ENCODE measurements at regions of chr1 and their contacts with region 1.

Region 1: GRCh38 chr1:6401673-6402072 is 8.1 kb upstream of the ACOT7 start:
- DNase-seq: no peak
- H3K4me3 ChIP-seq: no peak overlapping the region
- H3K27me3 ChIP-seq: peaks cover 2% of the 10 kb centered on the region; the same call in 1 of the 2 replicates
- CTCF ChIP-seq: no peak

Region 2: GRCh38 chr1:6343506-6344405 is 57.9 kb before region 1 on chr1:
- CTCF ChIA-PET with region 1: interaction called, 45 read pairs
- POLR2A ChIA-PET with region 1: no interaction called
- DNase-seq: no peak
- H3K4me3 ChIP-seq: no peak overlapping the region
- H3K27me3 ChIP-seq: no peaks in the 10 kb centered on the region
- CTCF ChIP-seq: peak; percentile 96

Region 3: DNA sequence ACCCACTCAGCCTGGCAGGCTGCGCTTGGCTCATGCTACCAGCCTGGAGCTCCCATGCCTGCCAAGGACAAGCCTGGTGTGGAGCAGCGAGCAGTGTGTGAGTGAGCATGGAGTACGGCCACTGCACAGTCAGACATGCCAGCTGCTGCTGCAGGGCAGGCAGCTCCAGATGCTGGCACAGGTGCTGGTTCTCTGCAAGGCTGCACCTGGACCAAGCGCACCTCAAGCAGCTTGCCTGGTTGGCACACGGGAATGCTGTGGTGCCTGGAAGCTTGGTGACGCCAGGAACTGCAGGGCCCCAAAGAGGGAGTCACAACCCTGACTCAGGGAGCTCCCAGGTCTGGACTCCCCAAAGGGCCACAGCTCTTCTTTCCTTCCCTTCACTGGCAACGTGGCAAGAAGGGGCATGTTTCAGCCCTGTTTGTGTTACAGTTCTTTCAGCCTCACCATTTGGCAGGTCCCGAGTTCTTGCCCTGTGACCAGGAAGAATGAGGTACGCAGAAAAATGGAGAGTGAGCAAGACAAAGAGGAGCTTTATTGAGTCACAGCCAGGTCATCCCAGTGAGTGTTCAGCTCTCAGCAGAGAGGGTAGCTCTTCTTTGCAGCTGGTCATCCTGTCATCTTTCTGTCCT is 34.2 kb before region 1 on chr1:
- CTCF ChIA-PET with region 1: interaction called, 83 read pairs
- POLR2A ChIA-PET with region 1: no interaction called
- DNase-seq: no peak
- H3K4me3 ChIP-seq: no peak overlapping the region
- H3K27me3 ChIP-seq: no peaks in the 10 kb centered on the region
- CTCF ChIP-seq: no peak

Region 4: GRCh38 chr1:6385488-6386191 is 16.0 kb before region 1 on chr1:
- CTCF ChIA-PET with region 1: interaction called, 4 read pairs
- POLR2A ChIA-PET with region 1: interaction called, 18 read pairs
- DNase-seq: no peak
- H3K4me3 ChIP-seq: no peak overlapping the region
- H3K27me3 ChIP-seq: no peaks in the 10 kb centered on the region
- CTCF ChIP-seq: no peak

Region 5: DNA sequence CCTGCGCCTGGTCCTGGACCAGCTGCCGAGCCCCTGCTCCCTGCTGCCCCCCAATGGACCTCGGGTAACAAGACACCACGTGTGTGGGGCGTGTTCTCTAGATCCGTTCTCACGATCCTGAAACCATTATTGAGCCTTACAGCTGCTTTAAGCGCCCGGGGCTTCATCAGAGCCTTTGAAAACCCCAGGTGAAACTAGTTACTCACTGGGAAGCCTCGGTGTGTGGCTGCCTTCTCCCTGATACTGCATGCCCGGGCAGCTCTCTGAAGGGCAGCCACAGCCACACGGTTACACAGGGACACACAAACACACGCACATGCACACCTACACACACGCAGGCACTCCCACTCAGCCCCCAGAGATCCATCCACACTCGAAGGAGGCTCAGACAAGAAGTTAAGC is 12.8 kb after region 1 on chr1:
- CTCF ChIA-PET with region 1: interaction called, 13 read pairs
- POLR2A ChIA-PET with region 1: no interaction called
- DNase-seq: no peak
- H3K4me3 ChIP-seq: no peak overlapping the region
- H3K27me3 ChIP-seq: peaks cover 27% of the 10 kb centered on the region
- CTCF ChIP-seq: peak; percentile 80